ENCODE measurements at regions of chr14 and their contacts with region 1.

Region 1: DNA sequence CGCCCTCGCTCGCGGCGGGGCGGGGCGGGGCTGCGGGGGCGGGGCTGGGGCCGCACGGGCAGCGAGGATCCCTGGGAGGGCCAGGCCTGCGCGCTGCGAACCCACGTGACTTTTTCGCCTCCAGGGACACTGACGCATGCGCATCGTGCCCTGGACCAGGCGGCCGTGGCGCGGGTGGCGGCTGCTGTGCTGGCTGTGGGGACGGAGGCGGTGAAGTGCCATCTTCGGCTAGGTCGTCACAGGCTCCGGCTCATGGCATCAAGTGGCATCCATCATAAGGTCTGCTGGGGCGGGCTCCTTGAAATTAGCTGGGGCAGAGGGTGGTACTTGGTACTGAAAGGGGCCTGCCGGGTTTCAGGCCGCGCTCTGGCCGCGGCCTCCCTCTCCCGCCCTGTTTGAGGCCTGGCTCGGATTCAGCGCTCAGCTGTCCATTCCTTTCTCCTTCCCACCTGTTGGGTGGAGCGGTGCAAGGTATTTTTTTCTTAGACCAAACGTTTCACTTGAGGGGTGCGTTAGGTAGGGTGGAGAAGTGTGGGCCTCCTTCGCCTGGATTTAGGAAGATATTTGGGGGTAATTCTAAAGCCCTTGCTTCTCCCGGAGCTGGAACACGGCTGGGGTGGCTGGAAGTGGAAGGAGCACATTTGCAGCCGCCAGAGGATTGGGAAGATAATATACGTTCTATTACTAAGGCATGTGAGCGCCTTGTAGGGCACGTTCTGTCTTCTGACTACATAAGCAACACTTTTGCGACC is at the start of gene PRPF39:
- DNase-seq: peak; percentile 93 to 94 (median 94)
- H3K4me3 ChIP-seq: peak within 1 kb of the TSS; percentile 69 to 98
- H3K4me3 Mint-ChIP-seq: peak within 1 kb of the TSS; percentile 95 to 99 (median 97)
- H3K27ac ChIP-seq: peak within 1 kb of the TSS; percentile 86
- H3K27ac Mint-ChIP-seq: peak within 1 kb of the TSS; percentile 92 to 97 (median 95)
- H3K4me1 ChIP-seq: peaks cover 55% of the 10 kb centered on the region
- H3K4me1 Mint-ChIP-seq: peaks cover 35 to 59% (median 48%) of the 10 kb centered on the region in 4 donors
- H3K27me3 ChIP-seq: no peaks in the 10 kb centered on the region
- H3K27me3 Mint-ChIP-seq: no peaks in the 10 kb centered on the region
- total RNA-seq, gene PRPF39: 80.7 to 85.6 TPM

Region 2: GRCh38 chr14:44669496-44669895 is 414.7 kb before region 1 on chr14:
- CTCF ChIA-PET with region 1: no interaction called
- POLR2A ChIA-PET with region 1: no interaction called
- intact Hi-C with region 1: no loop called
- DNase-seq: no peak
- H3K4me3 ChIP-seq: no peak overlapping the region
- H3K4me3 Mint-ChIP-seq: no peak overlapping the region
- H3K27ac ChIP-seq: no peak overlapping the region
- H3K27ac Mint-ChIP-seq: no peak overlapping the region
- H3K4me1 ChIP-seq: no peaks in the 10 kb centered on the region
- H3K4me1 Mint-ChIP-seq: no peaks in the 10 kb centered on the region
- H3K27me3 ChIP-seq: no peaks in the 10 kb centered on the region
- H3K27me3 Mint-ChIP-seq: peaks cover 0 to 3% of the 10 kb centered on the region in 2 donors

Region 3: GRCh38 chr14:44897045-44897844 is 186.9 kb before region 1 on chr14:
- CTCF ChIA-PET with region 1: no interaction called
- POLR2A ChIA-PET with region 1: interaction called, 3 read pairs
- intact Hi-C with region 1: loop called (anchors 1 kb)
- DNase-seq: peak; percentile 91 to 99 (median 93)
- H3K4me3 ChIP-seq: peak overlapping the region; percentile 30 to 74
- H3K4me3 Mint-ChIP-seq: peak overlapping the region; percentile 91 to 98 (median 94)
- H3K27ac ChIP-seq: peak overlapping the region; percentile 90
- H3K27ac Mint-ChIP-seq: peak overlapping the region; percentile 83 to 99 (median 98)
- H3K4me1 ChIP-seq: peaks cover 22% of the 10 kb centered on the region
- H3K4me1 Mint-ChIP-seq: peaks cover 14 to 27% (median 21%) of the 10 kb centered on the region in 4 donors
- H3K27me3 ChIP-seq: no peaks in the 10 kb centered on the region
- H3K27me3 Mint-ChIP-seq: no peaks in the 10 kb centered on the region

Region 4: GRCh38 chr14:45103806-45104205 is 19.7 kb after region 1 on chr14:
- CTCF ChIA-PET with region 1: no interaction called
- POLR2A ChIA-PET with region 1: no interaction called
- intact Hi-C with region 1: loop called (anchors 2 kb)
- DNase-seq: no peak
- H3K4me3 ChIP-seq: no peak overlapping the region
- H3K4me3 Mint-ChIP-seq: no peak overlapping the region
- H3K27ac ChIP-seq: no peak overlapping the region
- H3K27ac Mint-ChIP-seq: no peak overlapping the region
- H3K4me1 ChIP-seq: no peaks in the 10 kb centered on the region
- H3K4me1 Mint-ChIP-seq: peaks cover 0 to 7% (median 3%) of the 10 kb centered on the region in 4 donors
- H3K27me3 ChIP-seq: no peaks in the 10 kb centered on the region
- H3K27me3 Mint-ChIP-seq: no peaks in the 10 kb centered on the region

Region 5: GRCh38 chr14:45120096-45120495 is 35.9 kb after region 1 on chr14:
- CTCF ChIA-PET with region 1: no interaction called
- POLR2A ChIA-PET with region 1: no interaction called
- intact Hi-C with region 1: no loop called
- DNase-seq: no peak
- H3K4me3 ChIP-seq: no peak overlapping the region
- H3K4me3 Mint-ChIP-seq: no peak overlapping the region
- H3K27ac ChIP-seq: no peak overlapping the region
- H3K27ac Mint-ChIP-seq: peak overlapping the region in 1 of 7 donors; percentile 53
- H3K4me1 ChIP-seq: no peaks in the 10 kb centered on the region
- H3K4me1 Mint-ChIP-seq: peaks cover 0 to 1% (median 0%) of the 10 kb centered on the region in 4 donors
- H3K27me3 ChIP-seq: no peaks in the 10 kb centered on the region
- H3K27me3 Mint-ChIP-seq: no peaks in the 10 kb centered on the region

Region 6: DNA sequence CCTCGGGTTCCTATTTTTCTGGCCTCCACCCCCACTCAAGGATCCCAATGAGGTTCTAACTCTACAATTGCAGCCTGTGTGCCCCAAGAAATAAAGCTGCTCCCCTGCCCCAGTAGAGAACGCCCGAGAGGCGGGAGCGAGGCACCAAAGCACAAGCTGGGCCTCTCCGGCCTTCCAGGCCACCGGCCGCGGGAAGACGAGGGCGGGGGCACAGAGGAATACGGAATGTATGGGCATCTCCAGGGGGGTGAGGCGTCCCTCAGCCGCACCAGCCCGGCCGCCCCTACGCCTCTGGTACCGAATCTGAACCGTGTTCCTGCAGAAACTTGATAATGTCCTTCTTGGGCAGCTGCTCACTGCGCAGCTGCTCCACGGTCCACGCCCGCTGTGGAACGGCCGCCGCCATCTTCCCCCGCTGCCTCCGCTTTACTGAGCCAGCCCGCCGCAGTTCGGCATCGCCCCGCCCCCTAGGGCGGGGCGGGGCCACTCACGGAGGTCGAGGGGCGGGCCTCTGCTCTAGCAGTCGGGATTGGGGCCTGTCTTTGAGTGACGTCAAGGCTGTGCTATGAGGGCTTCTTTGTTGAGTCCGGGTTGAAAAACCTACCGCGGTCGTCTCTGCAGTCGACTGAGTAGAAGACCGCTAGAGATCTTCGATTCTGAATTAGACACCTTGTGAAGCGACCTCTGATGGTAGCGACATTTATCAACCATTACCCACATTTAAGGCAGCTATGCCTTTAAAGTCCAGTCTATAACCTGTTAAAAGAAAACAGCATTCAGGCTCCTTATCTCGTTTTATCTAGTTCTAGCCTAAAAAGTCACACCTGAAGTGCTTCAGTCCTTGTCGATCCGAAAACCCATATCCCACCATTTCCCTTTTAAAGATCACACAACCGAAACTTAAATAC is 50.2 kb after region 1 on chr14 and contains the start of gene FKBP3:
- CTCF ChIA-PET with region 1: no interaction called
- POLR2A ChIA-PET with region 1: interaction called, 17 read pairs
- intact Hi-C with region 1: loop called (anchors 1 kb)
- DNase-seq: peak; percentile 90 to 99 (median 96)
- H3K4me3 ChIP-seq: peak within 1 kb of the TSS; percentile 91 to 97
- H3K4me3 Mint-ChIP-seq: peak within 1 kb of the TSS; percentile 89 to 100 (median 98)
- H3K27ac ChIP-seq: peak within 1 kb of the TSS; percentile 91
- H3K27ac Mint-ChIP-seq: peak within 1 kb of the TSS; percentile 91 to 99 (median 97)
- H3K4me1 ChIP-seq: peaks cover 44% of the 10 kb centered on the region
- H3K4me1 Mint-ChIP-seq: peaks cover 26 to 62% (median 45%) of the 10 kb centered on the region in 4 donors
- H3K27me3 ChIP-seq: no peaks in the 10 kb centered on the region
- H3K27me3 Mint-ChIP-seq: no peaks in the 10 kb centered on the region
- total RNA-seq, gene FKBP3: 57.0 to 64.7 TPM

Region 7: GRCh38 chr14:45246691-45247090 is 162.5 kb after region 1 on chr14:
- CTCF ChIA-PET with region 1: no interaction called
- POLR2A ChIA-PET with region 1: no interaction called
- intact Hi-C with region 1: no loop called
- DNase-seq: no peak
- H3K4me3 ChIP-seq: no peak overlapping the region
- H3K4me3 Mint-ChIP-seq: no peak overlapping the region
- H3K27ac ChIP-seq: no peak overlapping the region
- H3K27ac Mint-ChIP-seq: no peak overlapping the region
- H3K4me1 ChIP-seq: peaks cover 52% of the 10 kb centered on the region
- H3K4me1 Mint-ChIP-seq: peaks cover 16 to 27% (median 18%) of the 10 kb centered on the region in 4 donors
- H3K27me3 ChIP-seq: no peaks in the 10 kb centered on the region
- H3K27me3 Mint-ChIP-seq: no peaks in the 10 kb centered on the region

Measured in CD4-positive, alpha-beta memory T cell (primary cell).